SK-N-SH (cell line): ENCODE measurements at regions of chr12 and their contacts with region 1.

Region 1: DNA sequence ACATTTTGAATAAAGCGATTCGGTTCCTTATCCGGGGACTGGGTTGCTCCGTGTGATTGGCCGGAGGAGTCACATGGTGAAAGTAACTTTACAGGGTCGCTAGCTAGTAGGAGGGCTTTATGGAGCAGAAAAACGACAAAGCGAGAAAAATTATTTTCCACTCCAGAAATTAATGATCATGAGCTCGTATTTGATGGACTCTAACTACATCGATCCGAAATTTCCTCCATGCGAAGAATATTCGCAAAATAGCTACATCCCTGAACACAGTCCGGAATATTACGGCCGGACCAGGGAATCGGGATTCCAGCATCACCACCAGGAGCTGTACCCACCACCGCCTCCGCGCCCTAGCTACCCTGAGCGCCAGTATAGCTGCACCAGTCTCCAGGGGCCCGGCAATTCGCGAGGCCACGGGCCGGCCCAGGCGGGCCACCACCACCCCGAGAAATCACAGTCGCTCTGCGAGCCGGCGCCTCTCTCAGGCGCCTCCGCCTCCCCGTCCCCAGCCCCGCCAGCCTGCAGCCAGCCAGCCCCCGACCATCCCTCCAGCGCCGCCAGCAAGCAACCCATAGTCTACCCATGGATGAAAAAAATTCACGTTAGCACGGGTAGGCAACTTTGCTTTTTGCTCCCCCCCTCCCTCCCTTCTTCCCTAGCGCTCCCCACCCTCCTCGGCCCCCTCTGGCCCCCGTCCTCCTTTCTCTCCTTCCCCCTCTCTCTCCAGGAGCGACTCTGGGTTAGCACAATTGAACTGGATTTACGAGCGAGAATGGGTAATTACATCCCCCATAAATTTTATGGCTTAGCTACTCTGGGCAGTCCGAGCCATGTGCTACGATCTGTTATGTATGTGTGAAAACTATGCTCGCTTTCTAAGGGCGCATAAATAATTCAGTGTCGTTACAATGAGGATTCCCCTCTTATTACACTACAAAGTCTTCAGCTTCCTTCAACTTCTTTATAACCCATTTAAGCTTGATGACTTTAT is at the start of gene HOXC4:
- DNase-seq: peak; percentile 86
- H3K4me3 ChIP-seq: peak within 1 kb of the TSS; percentile 82 to 85
- H3K27ac ChIP-seq: peak within 1 kb of the TSS; percentile 57 to 96
- H3K4me1 ChIP-seq: peaks cover 15 to 37% of the 10 kb centered on the region in 2 experiments; a peak in 3 of 4 replicates
- H3K27me3 ChIP-seq: no peaks in the 10 kb centered on the region
- CTCF ChIP-seq: 0 out of 2 replicates have a peak, but pooled peaks have one; percentile 14
- EP300 ChIP-seq: no peak
- RAD21 ChIP-seq: no peak
- polyA plus RNA-seq, gene HOXC4: 1.6 and 3.7 TPM in 2 replicates

Region 2: GRCh38 chr12:54040148-54040494 is 13.9 kb before region 1 on chr12:
- CTCF ChIA-PET with region 1: interaction called, 45 read pairs
- POLR2A ChIA-PET with region 1: interaction called, 25 read pairs
- DNase-seq: peak; percentile 70
- H3K4me3 ChIP-seq: no peak overlapping the region
- H3K27ac ChIP-seq: no peak overlapping the region
- H3K4me1 ChIP-seq: peaks cover 0 to 37% of the 10 kb centered on the region in 2 experiments; a peak in 1 of 4 replicates
- H3K27me3 ChIP-seq: no peaks in the 10 kb centered on the region
- CTCF ChIP-seq: no peak
- EP300 ChIP-seq: no peak
- RAD21 ChIP-seq: no peak

Region 3: DNA sequence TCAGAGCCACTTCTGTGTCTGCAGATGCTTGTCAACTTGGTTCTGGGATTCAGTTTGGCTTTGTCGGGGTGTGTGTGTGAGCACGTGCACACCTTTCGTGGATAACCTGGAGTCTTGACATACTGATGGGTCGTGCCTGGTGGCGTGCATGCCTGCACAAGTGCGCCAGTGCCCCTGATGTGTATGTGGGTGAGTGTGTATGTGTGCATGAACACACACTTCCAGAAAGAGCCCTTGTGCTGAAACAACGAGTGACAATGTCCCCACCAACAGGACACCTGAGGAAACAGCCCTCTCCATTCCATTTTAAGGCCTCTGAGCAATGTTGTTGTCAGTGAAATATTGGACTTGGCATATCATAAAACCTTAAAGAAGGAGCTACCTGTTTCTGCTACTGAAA is 80.8 kb after region 1 on chr12:
- CTCF ChIA-PET with region 1: interaction called, 8 read pairs
- POLR2A ChIA-PET with region 1: interaction called, 13 read pairs
- DNase-seq: peak; percentile 45
- H3K4me3 ChIP-seq: no peak overlapping the region
- H3K27ac ChIP-seq: peak overlapping the region in 1 of 2 experiments; percentile 67; a peak in 2 of 4 replicates
- H3K4me1 ChIP-seq: peaks cover 0 to 47% of the 10 kb centered on the region in 2 experiments; a peak in 2 of 4 replicates
- H3K27me3 ChIP-seq: no peaks in the 10 kb centered on the region
- CTCF ChIP-seq: no peak
- EP300 ChIP-seq: no peak
- RAD21 ChIP-seq: peak; percentile 76

Region 4: GRCh38 chr12:54173066-54173726 is 119.2 kb after region 1 on chr12:
- CTCF ChIA-PET with region 1: interaction called, 4 read pairs
- POLR2A ChIA-PET with region 1: interaction called, 15 read pairs
- DNase-seq: peak; percentile 85
- H3K4me3 ChIP-seq: peak overlapping the region; percentile 40 to 53
- H3K27ac ChIP-seq: peak overlapping the region in 1 of 2 experiments; percentile 30; a peak in 1 of 4 replicates
- H3K4me1 ChIP-seq: peaks cover 3 to 23% of the 10 kb centered on the region in 2 experiments; a peak in 1 of 4 replicates
- H3K27me3 ChIP-seq: no peaks in the 10 kb centered on the region
- CTCF ChIP-seq: no peak
- EP300 ChIP-seq: no peak
- RAD21 ChIP-seq: no peak

Region 5: DNA sequence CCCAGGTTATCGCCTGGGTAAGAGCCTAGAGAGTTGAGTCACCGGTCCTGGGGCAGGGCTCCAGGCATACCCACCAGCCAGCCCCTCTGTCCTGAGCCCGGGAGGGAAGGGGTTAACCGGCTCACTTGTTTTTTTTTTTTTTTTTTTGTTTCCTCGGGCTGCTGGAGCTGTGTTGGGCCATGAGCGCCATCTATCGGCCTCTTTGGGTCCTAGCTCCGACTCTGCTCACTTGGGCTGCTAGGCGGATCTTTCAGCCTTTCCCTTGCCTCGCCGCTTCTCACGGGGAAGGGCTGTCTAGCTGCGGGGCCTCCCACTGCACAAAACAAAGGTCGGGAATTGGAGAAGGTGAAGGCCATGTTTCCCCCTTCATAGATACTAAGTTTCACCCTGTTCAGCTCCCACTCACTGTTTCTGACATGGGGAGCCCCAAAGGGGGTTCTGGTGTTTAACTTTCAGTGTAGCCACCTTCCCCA is 137.5 kb after region 1 on chr12:
- CTCF ChIA-PET with region 1: interaction called, 5 read pairs
- POLR2A ChIA-PET with region 1: interaction called, 11 read pairs
- DNase-seq: peak; percentile 83
- H3K4me3 ChIP-seq: peak overlapping the region in 1 of 2 experiments; percentile 46; a peak in 1 of 4 replicates
- H3K27ac ChIP-seq: no peak overlapping the region
- H3K4me1 ChIP-seq: peaks cover 17 to 50% of the 10 kb centered on the region in 2 experiments; a peak in 3 of 4 replicates
- H3K27me3 ChIP-seq: no peaks in the 10 kb centered on the region
- CTCF ChIP-seq: peak; percentile 82
- EP300 ChIP-seq: no peak
- RAD21 ChIP-seq: peak; percentile 94

Region 6: GRCh38 chr12:54201001-54201794 is 147.2 kb after region 1 on chr12:
- CTCF ChIA-PET with region 1: interaction called, 19 read pairs
- POLR2A ChIA-PET with region 1: interaction called, 3 read pairs
- DNase-seq: peak; percentile 88
- H3K4me3 ChIP-seq: peak overlapping the region in 1 of 2 experiments; percentile 16; a peak in 1 of 4 replicates
- H3K27ac ChIP-seq: no peak overlapping the region
- H3K4me1 ChIP-seq: peaks cover 5 to 13% of the 10 kb centered on the region in 2 experiments; a peak in 2 of 4 replicates
- H3K27me3 ChIP-seq: peaks cover 16% of the 10 kb centered on the region; the same call in 1 of the 2 replicates
- CTCF ChIP-seq: peak; percentile 92
- EP300 ChIP-seq: no peak
- RAD21 ChIP-seq: peak; percentile 85

Region 7: DNA sequence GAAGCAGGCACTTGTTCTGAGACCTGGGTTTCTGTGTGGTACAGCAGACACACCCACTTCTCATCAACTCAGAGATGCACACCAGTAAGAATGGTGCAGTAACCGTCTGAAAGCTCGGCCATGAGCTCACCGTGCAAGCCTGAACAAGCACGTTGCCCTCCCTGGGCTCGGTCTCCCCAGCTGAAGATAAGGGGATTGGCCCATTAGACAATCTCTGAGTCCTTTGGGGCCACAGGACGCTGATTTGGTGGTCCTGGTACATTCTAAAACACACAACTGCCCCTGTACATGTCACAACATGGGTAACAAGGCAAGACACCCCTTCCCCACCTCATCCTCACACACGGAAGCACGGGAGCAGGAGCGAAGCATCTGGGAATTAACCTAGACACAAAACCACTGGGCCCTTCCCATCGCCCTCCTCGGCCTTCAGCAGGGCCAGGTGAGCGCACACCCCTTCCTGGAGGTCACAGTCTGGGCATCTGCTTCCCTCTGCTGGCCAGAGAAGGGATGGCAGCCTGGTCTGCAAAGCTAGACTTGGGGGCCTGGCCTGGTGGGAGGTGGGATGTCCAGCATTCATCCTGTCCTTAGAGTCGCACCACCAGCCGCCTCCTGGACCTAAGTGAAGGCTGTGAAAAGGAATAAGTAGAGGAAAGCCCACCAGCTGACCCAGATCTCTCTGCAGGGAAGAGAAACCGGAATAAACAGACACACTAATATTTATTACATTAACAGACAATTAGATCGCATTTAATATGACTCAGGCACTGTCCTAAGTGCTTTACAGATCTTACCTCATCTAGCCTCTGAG is 153.6 kb after region 1 on chr12:
- CTCF ChIA-PET with region 1: interaction called, 21 read pairs
- POLR2A ChIA-PET with region 1: no interaction called
- DNase-seq: peak; percentile 81
- H3K4me3 ChIP-seq: no peak overlapping the region
- H3K27ac ChIP-seq: no peak overlapping the region; a peak in 1 of 4 replicates
- H3K4me1 ChIP-seq: peaks cover 0 to 15% of the 10 kb centered on the region in 2 experiments; a peak in 1 of 4 replicates
- H3K27me3 ChIP-seq: peaks cover 16% of the 10 kb centered on the region; the same call in 1 of the 2 replicates
- CTCF ChIP-seq: peak; percentile 90
- EP300 ChIP-seq: no peak
- RAD21 ChIP-seq: peak; percentile 86